Posterior vena cava (tissue), 2 donors: ENCODE measurements at regions of chr14 and their contacts with region 1.

Region 1: DNA sequence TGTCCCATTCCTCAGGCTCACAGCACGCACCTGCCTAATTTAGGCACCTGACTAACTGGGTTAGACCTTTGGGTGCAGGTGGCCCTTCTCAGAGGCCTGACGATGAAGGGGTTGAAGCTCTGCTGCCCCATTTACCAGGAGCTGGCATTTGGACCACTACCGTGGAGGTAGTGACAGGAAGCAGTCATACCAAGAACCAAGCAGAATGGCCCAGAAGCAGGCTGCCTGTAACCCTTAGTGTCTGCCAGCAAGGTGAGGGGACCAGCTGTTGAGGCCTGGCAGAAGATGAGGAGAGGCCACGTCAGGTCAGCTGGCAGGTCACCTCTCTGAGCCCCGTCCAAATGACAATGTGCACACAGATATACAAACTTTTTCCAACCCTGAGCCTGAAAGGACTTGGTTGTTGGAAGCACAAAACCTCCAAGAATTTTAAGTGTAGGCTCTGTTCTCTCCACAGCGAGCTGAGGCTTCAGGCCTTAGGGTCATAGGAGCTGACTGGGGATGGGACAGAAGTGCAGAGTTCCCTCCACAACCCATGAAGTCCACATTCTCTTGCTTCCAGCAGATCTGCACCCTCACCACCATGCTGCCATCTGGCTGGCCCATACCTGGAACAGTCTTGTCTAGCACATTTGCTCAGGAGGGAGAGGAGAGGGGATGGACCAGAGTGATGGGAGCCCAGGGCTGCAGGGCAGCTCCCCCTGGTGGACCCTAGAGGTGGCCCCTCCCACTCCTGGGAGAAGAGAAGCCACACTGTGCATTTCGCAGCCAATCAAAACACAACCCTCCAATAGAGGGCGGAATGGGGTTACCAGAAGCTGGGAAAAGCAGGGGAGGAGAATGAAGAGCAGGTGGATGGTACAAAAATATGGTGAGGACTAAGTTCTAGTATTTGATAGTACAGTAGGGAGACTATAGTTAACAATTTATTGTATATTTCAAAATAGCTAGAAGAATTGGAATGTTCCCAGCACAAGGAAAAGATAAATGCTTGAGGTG is 23.3 kb downstream of the VASH1 start:
- DNase-seq: peak; percentile 90

Region 2: DNA sequence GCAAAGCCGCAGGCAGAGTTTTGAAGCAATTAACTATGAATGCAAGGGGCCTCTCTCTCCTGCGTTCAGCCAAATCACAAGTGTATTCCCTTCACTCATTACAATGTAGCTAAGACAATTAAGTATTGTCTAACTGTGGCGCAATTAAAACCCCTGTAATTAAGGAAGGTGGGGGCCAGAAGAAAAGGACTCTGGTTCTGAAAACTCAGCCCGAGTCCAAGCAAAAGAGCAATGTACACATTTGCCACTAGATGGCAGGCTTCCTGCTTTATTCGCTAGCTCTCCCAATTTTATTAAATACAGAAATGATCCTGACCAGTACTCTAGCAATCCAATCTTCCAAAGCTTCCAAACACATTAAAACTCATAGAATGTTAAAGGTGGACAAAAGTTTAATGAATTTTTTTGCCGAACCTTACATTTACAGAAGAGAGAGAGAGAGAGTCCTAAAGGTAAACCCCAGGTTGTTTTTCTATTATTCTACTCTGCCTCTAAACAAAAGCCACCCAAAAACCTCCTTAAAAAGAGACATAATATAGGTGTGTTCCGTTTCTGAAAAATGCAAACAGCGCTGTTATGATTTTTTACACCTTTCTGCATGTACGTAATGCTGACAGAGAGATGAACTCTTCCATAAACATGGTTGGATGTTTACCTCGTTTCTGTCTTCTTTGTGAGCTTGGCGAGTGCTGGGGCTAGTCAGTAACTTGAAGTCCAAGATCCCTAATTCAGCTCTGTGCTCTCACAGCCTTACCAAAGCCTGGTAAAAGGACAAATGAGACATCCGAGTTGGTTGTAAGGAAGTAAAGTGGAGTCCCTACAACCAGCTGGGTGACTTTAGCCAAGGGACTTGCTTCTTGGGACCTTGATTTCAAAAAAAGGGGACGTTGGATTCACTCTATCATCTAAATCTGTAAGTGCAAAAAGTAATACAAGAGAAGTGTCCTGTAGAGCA is 74.2 kb before region 1 on chr14:
- intact Hi-C with region 1: loop called (anchors 5 kb)
- DNase-seq: no peak

Region 3: GRCh38 chr14:76726551-76726970 is 58.0 kb before region 1 on chr14:
- intact Hi-C with region 1: loop called in 1 of 2 experiments (anchors 2 kb)
- DNase-seq: no peak

Region 4: GRCh38 chr14:76904740-76905438 is 120.3 kb after region 1 on chr14:
- intact Hi-C with region 1: no loop called
- DNase-seq: peak; percentile 96